ENCODE measurements at regions of chr10 and their contacts with region 1.

Region 1: DNA sequence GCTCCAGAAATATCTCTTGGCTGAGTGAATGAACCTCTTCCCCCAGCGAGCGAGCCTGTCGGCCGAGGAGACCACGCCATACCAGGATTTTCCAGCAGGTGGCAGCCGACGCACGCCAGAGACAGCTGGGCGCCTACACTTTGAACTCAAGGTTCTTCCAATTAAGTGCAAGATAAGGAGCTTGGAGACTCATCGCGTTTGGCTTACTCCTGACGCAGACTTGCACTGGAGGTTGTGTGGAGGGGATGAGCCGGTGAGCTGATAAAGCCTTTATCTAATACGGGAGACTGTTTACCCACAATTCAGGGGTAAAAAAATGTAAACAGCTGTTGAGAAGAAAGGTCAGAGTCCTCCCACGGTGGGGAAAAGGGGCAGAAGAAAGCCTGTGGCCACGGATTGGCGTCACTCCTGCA is 45.9 kb upstream of the EMX2 start:
- DNase-seq: peak; percentile 54 to 80
- ATAC-seq: peak; percentile 65 to 86 (median 77)
- H3K4me3 ChIP-seq: no peak overlapping the region
- H3K4me3 Mint-ChIP-seq: no peak overlapping the region
- H3K27ac ChIP-seq: no peak overlapping the region
- H3K27ac Mint-ChIP-seq: no peak overlapping the region
- H3K4me1 ChIP-seq: no peaks in the 10 kb centered on the region
- H3K4me1 Mint-ChIP-seq: no peaks in the 10 kb centered on the region
- H3K27me3 ChIP-seq: no peaks in the 10 kb centered on the region
- H3K27me3 Mint-ChIP-seq: peaks cover 14 to 42% of the 10 kb centered on the region in 2 donors
- CTCF ChIP-seq: peak; percentile 84

Region 2: GRCh38 chr10:117530791-117531190 is 34.2 kb after region 1 on chr10:
- intact Hi-C with region 1: no loop called
- DNase-seq: no peak
- ATAC-seq: no peak
- H3K4me3 ChIP-seq: no peak overlapping the region
- H3K4me3 Mint-ChIP-seq: no peak overlapping the region
- H3K27ac ChIP-seq: no peak overlapping the region
- H3K27ac Mint-ChIP-seq: no peak overlapping the region
- H3K4me1 ChIP-seq: no peaks in the 10 kb centered on the region
- H3K4me1 Mint-ChIP-seq: no peaks in the 10 kb centered on the region
- H3K27me3 ChIP-seq: peaks cover 40% of the 10 kb centered on the region
- H3K27me3 Mint-ChIP-seq: peaks cover 59 to 71% of the 10 kb centered on the region in 2 donors
- CTCF ChIP-seq: no peak

Region 3: DNA sequence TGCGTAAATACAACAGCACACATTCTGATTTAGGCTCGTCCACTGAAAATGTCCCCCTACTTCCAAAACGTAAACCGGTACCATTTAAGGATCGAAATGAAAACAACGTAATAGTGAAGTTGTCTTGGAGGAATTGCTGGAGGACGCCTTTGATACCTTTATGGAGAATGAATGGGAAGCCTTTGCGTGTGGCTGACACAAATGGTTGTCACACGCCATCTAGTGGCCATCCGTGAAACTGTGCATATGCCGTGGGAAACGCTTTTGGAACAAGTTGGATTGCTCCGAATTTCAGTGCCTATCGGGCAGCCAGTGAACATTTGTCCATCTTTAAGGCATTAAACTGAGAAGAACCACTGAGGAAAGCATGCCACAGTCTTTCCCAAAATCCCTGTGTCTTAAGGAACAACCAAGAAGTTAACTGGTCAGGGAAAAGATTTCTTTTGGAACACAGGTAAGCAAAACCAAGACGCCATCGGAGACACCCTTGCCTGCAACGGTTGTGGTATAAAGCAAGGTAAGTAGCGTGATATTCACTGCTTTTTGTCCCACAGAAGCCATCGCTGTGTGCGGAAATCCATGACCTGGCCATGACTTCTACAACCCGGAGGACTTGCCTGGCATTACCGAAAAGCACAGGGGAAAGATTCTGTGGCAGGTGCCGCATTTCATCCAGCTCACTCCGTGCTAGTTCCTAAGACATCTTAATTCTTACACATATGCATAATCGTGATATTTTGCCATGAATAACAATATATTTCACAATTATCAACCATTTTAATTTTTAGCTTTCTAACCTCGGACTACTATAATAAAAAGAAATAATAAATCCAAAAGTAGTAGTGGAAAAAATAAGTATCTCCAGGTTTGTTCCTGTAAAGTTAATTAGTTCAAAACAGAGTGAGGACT is 744.9 kb after region 1 on chr10:
- intact Hi-C with region 1: loop called (anchors 1 kb)
- DNase-seq: peak; percentile 43 to 79
- ATAC-seq: peak in 1 of 3 donors; percentile 61
- H3K4me3 ChIP-seq: no peak overlapping the region
- H3K4me3 Mint-ChIP-seq: no peak overlapping the region
- H3K27ac ChIP-seq: no peak overlapping the region
- H3K27ac Mint-ChIP-seq: no peak overlapping the region
- H3K4me1 ChIP-seq: no peaks in the 10 kb centered on the region
- H3K4me1 Mint-ChIP-seq: peaks cover 0 to 8% of the 10 kb centered on the region in 2 donors
- H3K27me3 ChIP-seq: peaks cover 12% of the 10 kb centered on the region
- H3K27me3 Mint-ChIP-seq: peaks cover 29 to 30% of the 10 kb centered on the region in 2 donors
- CTCF ChIP-seq: peak; percentile 95

Region 4: DNA sequence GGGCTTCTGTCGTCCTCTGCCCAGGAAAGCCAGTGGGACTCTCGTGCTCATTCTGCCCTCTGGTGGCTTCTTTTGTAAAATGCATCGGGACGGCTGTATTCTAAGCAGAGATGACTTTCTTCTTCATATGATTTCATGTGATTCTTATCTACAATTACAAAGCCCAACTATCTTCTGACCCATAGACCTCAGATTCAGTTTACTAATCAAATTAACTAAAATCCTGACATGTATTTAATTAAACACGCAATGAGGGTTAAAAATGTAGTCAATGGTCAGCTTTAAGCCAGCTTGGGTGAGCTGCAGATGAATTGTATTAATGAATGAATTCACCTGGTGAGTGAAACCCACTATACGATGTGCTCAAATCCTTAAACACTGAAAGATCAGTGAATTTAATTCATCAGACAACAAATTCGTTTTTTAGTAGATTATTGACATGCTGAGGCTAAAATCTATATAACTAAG is 963.1 kb after region 1 on chr10:
- intact Hi-C with region 1: loop called (anchors 1 kb)
- DNase-seq: peak; percentile 21 to 69
- ATAC-seq: peak; percentile 62 to 74 (median 67)
- H3K4me3 ChIP-seq: no peak overlapping the region
- H3K4me3 Mint-ChIP-seq: no peak overlapping the region
- H3K27ac ChIP-seq: no peak overlapping the region
- H3K27ac Mint-ChIP-seq: no peak overlapping the region
- H3K4me1 ChIP-seq: no peaks in the 10 kb centered on the region
- H3K4me1 Mint-ChIP-seq: peaks cover 0 to 5% of the 10 kb centered on the region in 2 donors
- H3K27me3 ChIP-seq: peaks cover 8% of the 10 kb centered on the region
- H3K27me3 Mint-ChIP-seq: peaks cover 20 to 62% of the 10 kb centered on the region in 2 donors
- CTCF ChIP-seq: peak; percentile 75